IMR-90 (cell line): ENCODE measurements at regions of chr3 and their contacts with region 1.

Region 1: GRCh38 chr3:42539869-42540714 is 37.6 kb downstream of the VIPR1 start:
- DNase-seq: no peak
- ATAC-seq: 0 out of 2 replicates have a peak, but pooled peaks have one; percentile 25
- H3K4me3 ChIP-seq: no peak overlapping the region
- H3K27ac ChIP-seq: no peak overlapping the region
- H3K4me1 ChIP-seq: no peaks in the 10 kb centered on the region; the same call in 1 of the 2 replicates
- H3K27me3 ChIP-seq: peaks cover 3% of the 10 kb centered on the region; the same call in 1 of the 2 replicates
- CTCF ChIP-seq: peak; percentile 43
- POLR2A ChIP-seq: no peak
- RAD21 ChIP-seq: no peak

Region 2: GRCh38 chr3:42256135-42256819 is 283.8 kb before region 1 on chr3:
- CTCF ChIA-PET with region 1: no interaction called
- POLR2A ChIA-PET with region 1: no interaction called
- dilution Hi-C with region 1: no loop called
- in situ Hi-C with region 1: loop called (anchors 10 kb)
- intact Hi-C with region 1: no loop called
- DNase-seq: peak; percentile 56
- ATAC-seq: peak; percentile 46; the same call in 1 of the 2 replicates
- H3K4me3 ChIP-seq: no peak overlapping the region
- H3K27ac ChIP-seq: no peak overlapping the region
- H3K4me1 ChIP-seq: peaks cover 2% of the 10 kb centered on the region; the same call in 1 of the 2 replicates
- H3K27me3 ChIP-seq: peaks cover 14% of the 10 kb centered on the region
- CTCF ChIP-seq: no peak
- POLR2A ChIP-seq: no peak
- RAD21 ChIP-seq: no peak